ENCODE measurements at regions of chr12 and their contacts with region 1.

Region 1: GRCh38 chr12:85872497-85873091 is 1.5 kb upstream of the NTS start:
- DNase-seq: no peak
- H3K4me3 ChIP-seq: no peak overlapping the region
- H3K27ac ChIP-seq: no peak overlapping the region
- H3K4me1 ChIP-seq: no peaks in the 10 kb centered on the region
- H3K27me3 ChIP-seq: no peaks in the 10 kb centered on the region
- CTCF ChIP-seq: peak; percentile 20 to 74 (median 60)
- POLR2A ChIP-seq: no peak

Region 2: GRCh38 chr12:85468356-85469157 is 404.0 kb before region 1 on chr12:
- intact Hi-C with region 1: loop called (anchors 5 kb)
- DNase-seq: peak; percentile 29 to 31
- H3K4me3 ChIP-seq: peak overlapping the region in 1 of 3 donors; percentile 45
- H3K27ac ChIP-seq: peak overlapping the region in 1 of 3 donors; percentile 10
- H3K4me1 ChIP-seq: peaks cover 5 to 6% of the 10 kb centered on the region in 2 donors
- H3K27me3 ChIP-seq: no peaks in the 10 kb centered on the region
- CTCF ChIP-seq: peak in 5 of 6 experiments; percentile 45 to 80 (median 75)
- POLR2A ChIP-seq: no peak

Region 3: GRCh38 chr12:85531341-85531740 is 341.3 kb before region 1 on chr12:
- intact Hi-C with region 1: no loop called
- DNase-seq: no peak
- H3K4me3 ChIP-seq: no peak overlapping the region
- H3K27ac ChIP-seq: no peak overlapping the region
- H3K4me1 ChIP-seq: no peaks in the 10 kb centered on the region
- H3K27me3 ChIP-seq: no peaks in the 10 kb centered on the region
- CTCF ChIP-seq: no peak
- POLR2A ChIP-seq: no peak